Activated CD8-positive, alpha-beta T cell treated with anti-CD3 and anti-CD28 coated beads for 36 hours (primary cell): ENCODE measurements at regions of chr18 and their contacts with region 1.

Region 1: DNA sequence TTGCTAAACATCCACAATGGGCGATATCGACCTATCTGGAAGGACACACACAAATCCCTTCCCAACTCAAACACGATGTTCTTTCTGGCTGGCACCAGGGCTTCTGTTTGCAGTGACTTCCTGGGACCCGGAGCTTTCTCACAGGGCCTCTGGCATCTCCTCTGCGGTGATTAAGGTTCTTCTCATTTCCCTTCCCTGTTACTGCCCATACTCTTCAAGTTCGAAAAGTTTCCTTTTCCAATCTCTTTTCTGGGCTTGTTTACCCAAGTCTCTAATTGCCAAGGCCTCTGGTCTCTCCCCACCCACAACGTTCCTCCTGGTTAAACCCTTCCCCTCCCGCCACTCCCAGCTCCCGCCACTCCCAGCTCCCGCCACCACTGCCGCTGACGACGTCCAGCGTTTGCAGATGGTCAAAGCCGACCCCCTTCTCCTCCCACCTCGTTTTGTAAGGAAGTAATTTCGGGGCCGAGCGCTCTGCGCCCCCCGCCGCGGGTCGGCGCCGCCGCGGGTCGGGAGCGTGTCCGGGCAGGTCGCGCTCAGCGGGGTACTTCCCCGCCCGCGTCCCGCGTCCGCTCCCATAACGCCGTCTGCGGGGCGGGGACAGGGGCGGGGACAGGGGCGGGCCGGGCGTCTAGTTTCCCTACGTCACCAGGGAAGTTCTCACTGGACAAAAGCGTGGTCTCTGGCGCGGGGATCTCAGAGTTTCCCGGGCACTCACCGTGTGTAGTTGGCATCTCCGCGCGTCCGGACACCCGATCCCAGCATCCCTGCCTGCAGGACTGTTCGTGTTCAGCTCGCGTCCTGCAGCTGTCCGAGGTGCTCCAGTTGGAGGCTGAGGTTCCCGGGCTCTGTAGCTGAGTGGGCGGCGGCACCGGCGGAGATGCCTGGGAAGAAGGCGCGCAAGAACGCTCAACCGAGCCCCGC is at the start of gene PMAIP1:
- DNase-seq: peak; percentile 90
- ATAC-seq: peak; percentile 80
- H3K4me3 Mint-ChIP-seq: peak within 1 kb of the TSS; percentile 92
- H3K27ac Mint-ChIP-seq: peak within 1 kb of the TSS; percentile 97
- H3K4me1 Mint-ChIP-seq: peaks cover 30% of the 10 kb centered on the region
- H3K27me3 Mint-ChIP-seq: no peaks in the 10 kb centered on the region
- CTCF ChIP-seq: no peak
- total RNA-seq, gene PMAIP1: 92.8 to 98.9 TPM

Region 2: DNA sequence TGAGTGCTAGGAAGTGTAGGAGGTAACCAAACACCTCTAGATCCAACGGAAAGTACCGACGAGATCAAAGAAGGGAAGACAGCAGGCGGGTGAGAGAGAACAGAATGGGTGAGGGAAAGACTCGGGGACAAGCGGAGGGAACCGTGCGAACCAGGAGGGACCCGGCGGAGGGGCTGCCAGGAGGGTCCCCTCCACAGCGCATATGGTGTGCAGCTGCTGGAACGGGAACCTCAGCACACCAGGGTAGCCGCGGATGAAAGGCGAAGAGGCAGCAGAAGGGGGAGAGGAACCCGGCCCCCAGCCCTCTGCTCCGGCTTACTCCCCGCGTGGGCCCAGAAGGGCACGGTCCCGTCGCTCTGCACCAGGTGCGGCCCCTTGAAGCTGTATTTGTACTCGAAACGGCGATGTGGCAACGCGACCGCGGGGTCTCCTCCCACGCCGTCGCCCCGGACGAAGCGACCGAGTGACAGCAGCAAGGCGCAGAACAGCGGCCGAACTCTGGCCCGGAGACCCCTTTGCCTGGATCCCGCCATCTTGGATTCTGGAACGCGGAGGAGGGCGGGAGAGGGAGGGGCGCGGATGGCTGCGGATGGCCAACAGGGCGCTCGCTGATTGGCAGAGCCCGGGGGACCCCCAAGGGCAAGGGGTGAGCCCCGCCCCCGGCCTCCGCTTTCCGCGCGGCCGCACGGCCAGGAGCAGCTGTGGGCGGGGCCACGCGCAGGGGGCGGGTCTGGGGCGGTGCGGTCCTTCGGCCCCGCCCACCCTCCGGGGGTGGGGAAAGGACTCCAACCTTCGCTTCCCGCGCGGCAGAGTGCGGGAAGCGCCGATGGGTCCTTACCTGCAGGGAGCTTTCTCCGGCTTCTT is 540.6 kb before region 1 on chr18 and contains the start of gene LMAN1:
- CTCF ChIA-PET with region 1: no interaction called
- POLR2A ChIA-PET with region 1: interaction called, 4 read pairs
- intact Hi-C with region 1: loop called (anchors 10 kb)
- DNase-seq: peak; percentile 96
- ATAC-seq: peak; percentile 95
- H3K4me3 Mint-ChIP-seq: peak within 1 kb of the TSS; percentile 87
- H3K27ac Mint-ChIP-seq: peak within 1 kb of the TSS; percentile 91
- H3K4me1 Mint-ChIP-seq: peaks cover 36% of the 10 kb centered on the region
- H3K27me3 Mint-ChIP-seq: no peaks in the 10 kb centered on the region
- CTCF ChIP-seq: no peak
- total RNA-seq, gene LMAN1: 126 to 140 TPM

Region 3: DNA sequence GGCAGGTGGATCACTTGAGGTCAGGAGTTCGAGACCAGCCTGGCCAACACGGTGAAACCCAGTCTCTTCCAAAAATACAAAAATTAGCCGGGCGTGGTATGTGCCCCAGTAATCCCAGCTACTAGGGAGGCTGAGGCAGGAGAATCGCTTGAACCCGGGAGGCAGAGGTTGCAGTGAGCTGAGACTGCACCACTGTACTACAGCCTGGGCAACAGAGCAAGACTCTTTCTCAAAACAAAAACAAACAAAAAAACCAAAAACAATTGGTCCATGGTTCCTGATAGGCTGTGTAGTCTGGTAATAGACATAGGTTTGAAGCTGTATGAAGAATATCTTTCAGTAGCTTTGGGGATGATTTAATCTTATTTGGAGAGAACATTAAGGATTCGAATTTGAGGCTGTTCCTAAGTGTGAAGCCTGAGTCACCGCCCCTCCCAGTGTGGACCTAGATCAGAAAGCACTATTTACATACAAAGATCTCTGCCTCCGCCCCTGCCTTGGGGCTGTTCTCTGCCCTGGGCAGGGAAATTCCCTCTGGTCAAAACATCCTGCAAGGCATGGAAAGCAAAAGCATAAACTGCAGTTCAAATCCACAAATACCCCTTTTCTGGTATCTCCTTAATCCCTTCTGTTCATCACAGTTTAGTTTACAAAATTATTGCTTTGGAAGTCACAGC is 52.6 kb before region 1 on chr18:
- CTCF ChIA-PET with region 1: no interaction called
- POLR2A ChIA-PET with region 1: interaction called, 17 read pairs
- intact Hi-C with region 1: no loop called
- DNase-seq: peak; percentile 83
- ATAC-seq: peak; percentile 99
- H3K4me3 Mint-ChIP-seq: no peak overlapping the region
- H3K27ac Mint-ChIP-seq: peak overlapping the region; percentile 43
- H3K4me1 Mint-ChIP-seq: peaks cover 15% of the 10 kb centered on the region
- H3K27me3 Mint-ChIP-seq: peaks cover 2% of the 10 kb centered on the region
- CTCF ChIP-seq: no peak

Region 4: GRCh38 chr18:59918320-59918755 is 18.8 kb after region 1 on chr18:
- CTCF ChIA-PET with region 1: no interaction called
- POLR2A ChIA-PET with region 1: interaction called, 36 read pairs
- intact Hi-C with region 1: no loop called
- DNase-seq: peak; percentile 57
- ATAC-seq: peak; percentile 64
- H3K4me3 Mint-ChIP-seq: no peak overlapping the region
- H3K27ac Mint-ChIP-seq: no peak overlapping the region
- H3K4me1 Mint-ChIP-seq: peaks cover 27% of the 10 kb centered on the region
- H3K27me3 Mint-ChIP-seq: peaks cover 8% of the 10 kb centered on the region
- CTCF ChIP-seq: no peak

Region 5: DNA sequence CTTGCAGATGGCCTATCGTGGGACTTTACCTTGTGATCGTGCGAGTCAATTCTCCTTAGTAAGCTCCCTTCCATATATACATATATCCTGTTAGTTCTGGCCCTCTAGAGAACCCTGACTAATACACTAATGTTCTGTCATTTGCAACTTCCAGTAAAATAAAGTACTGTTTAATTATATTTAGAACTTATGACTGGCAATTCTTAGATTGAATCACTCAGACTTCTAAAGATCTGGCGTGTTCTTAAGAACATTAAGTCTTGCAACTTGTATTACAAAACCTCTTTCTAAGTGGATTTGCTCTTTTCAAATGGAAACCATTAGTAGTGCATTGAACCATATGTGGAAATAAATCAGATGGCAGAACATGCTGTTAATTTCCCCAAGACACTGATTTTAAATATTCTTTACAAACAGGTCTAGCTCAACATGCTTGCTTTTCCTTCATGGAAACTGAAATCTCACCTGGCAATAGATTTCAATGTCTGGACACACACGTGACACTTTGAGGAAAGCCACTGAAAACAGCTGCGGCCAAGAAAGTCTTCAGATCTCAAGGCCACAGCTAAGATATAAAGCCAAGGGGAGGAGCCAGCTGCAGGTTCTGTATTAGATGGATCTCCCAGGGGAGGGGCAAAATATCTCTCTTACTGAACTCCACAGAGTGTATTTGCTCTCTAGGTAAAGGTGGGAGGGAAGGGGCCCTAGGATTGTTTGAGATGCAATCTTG is 50.8 kb after region 1 on chr18:
- CTCF ChIA-PET with region 1: no interaction called
- POLR2A ChIA-PET with region 1: interaction called, 10 read pairs
- intact Hi-C with region 1: no loop called
- DNase-seq: peak; percentile 17
- ATAC-seq: peak; percentile 14
- H3K4me3 Mint-ChIP-seq: no peak overlapping the region
- H3K27ac Mint-ChIP-seq: no peak overlapping the region
- H3K4me1 Mint-ChIP-seq: peaks cover 18% of the 10 kb centered on the region
- H3K27me3 Mint-ChIP-seq: peaks cover 3% of the 10 kb centered on the region
- CTCF ChIP-seq: no peak

Region 6: DNA sequence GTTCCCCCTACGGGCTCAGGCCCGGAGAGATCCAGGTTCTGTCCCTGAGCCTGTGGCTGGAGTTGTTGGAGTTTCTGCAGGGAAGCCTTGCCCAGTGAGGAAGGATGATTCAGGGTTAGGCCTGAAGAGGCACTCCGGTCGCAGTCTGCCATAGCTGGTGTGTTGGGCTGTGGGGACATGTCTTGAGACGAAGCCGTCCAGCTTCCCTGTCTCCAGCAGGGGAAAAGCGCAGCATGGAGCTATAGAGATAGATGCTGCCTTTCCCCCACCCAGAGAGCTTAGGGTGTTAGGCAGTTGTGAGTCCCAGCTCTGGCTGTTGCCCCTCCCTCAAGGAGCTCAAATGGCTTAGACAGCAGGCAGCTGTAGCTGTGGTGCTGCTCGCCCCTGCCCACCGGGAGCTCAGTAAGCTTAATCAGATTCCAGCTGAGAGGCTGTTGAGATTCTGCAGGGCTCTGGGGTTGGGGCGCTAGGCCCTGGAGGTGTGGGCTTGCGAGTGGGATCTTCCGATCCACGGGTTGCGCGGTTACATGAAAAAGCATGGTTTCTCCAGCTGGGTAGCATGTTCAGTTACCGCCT is 104.1 kb after region 1 on chr18:
- CTCF ChIA-PET with region 1: no interaction called
- POLR2A ChIA-PET with region 1: no interaction called
- intact Hi-C with region 1: no loop called
- DNase-seq: no peak
- ATAC-seq: no peak
- H3K4me3 Mint-ChIP-seq: no peak overlapping the region
- H3K27ac Mint-ChIP-seq: no peak overlapping the region
- H3K4me1 Mint-ChIP-seq: no peaks in the 10 kb centered on the region
- H3K27me3 Mint-ChIP-seq: peaks cover 13% of the 10 kb centered on the region
- CTCF ChIP-seq: no peak